PC-9 (cell line): ENCODE measurements at regions of chr19 and their contacts with region 1.

Region 1: DNA sequence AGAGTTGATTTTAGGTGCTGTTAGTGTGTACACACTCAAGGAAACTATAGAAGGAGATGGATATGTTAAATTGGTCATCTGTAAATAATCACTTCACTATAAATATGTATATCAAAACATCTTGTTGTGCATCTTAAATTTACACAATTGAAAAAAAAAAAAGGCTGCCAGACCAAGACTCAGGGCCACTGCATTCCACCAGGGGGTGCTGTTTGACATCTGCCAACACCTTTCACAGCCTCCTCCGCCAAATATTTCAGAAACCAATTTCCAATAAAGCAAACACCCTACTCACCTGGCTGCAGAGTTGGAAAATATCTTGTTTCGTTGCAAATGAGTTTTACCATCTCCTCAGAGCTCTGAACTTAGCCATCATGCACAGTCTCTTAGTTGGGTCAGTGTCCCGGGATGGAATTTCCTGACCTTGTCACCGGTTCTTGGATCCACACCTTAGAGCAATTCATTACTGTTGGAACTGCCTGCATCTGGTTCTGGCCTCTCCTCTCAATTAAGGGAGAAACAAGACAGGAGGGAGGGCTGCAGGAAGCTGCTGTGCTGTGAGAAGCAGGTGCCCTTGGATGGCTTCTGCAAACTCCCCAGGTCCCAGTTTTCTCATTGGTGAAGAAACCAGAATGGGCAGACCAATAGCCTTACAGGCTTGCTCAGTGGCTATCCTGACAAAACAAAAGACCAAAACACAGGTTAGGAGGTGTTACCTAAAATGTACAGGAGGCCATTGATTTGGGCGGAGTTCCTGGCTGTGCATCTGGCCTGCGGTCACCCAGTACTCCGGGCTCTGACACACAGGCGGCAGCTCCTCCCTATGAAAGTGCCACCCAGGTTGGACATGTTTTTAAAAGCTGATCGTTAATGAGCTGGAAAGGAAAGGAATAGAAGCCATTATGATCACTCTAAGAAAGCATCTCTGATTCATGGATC is 746.6 kb downstream of the UQCRFS1 start:
- DNase-seq: peak in 1 of 2 experiments; percentile 26
- H3K4me3 ChIP-seq: no peak overlapping the region
- H3K27ac ChIP-seq: no peak overlapping the region
- H3K4me1 ChIP-seq: no peaks in the 10 kb centered on the region
- H3K27me3 ChIP-seq: peaks cover 24% of the 10 kb centered on the region
- CTCF ChIP-seq: peak; percentile 84

Region 2: GRCh38 chr19:27752530-27753184 is 713.7 kb before region 1 on chr19:
- CTCF ChIA-PET with region 1: no interaction called
- POLR2A ChIA-PET with region 1: no interaction called
- intact Hi-C with region 1: no loop called
- DNase-seq: no peak
- H3K4me3 ChIP-seq: no peak overlapping the region
- H3K27ac ChIP-seq: no peak overlapping the region
- H3K4me1 ChIP-seq: no peaks in the 10 kb centered on the region
- H3K27me3 ChIP-seq: no peaks in the 10 kb centered on the region
- CTCF ChIP-seq: no peak

Region 3: GRCh38 chr19:28633319-28634018 is 167.1 kb after region 1 on chr19:
- CTCF ChIA-PET with region 1: no interaction called
- POLR2A ChIA-PET with region 1: no interaction called
- intact Hi-C with region 1: loop called (anchors 2 kb)
- DNase-seq: peak in 1 of 2 experiments; percentile 34
- H3K4me3 ChIP-seq: no peak overlapping the region
- H3K27ac ChIP-seq: no peak overlapping the region
- H3K4me1 ChIP-seq: no peaks in the 10 kb centered on the region
- H3K27me3 ChIP-seq: peaks cover 3% of the 10 kb centered on the region; the same call in 1 of the 2 replicates
- CTCF ChIP-seq: peak; percentile 93

Region 4: DNA sequence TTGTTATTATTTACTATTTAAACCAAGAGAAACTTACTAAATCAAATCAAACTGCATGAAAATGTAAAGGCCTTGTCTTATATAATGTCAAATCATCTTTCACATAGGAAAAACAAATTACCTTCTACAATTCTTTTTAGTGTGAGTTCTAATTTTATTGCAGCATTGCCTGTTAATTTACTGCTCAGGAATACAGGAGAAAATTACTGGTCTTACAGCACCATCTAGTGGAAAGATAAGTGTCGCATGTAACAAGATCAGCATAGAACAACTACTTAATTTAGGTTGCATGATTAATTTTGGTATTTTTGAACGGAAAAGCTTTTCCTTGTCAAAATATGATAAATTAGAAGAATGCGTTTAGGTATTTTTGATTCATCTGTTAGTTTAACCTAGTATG is 243.9 kb after region 1 on chr19:
- CTCF ChIA-PET with region 1: no interaction called
- POLR2A ChIA-PET with region 1: no interaction called
- intact Hi-C with region 1: loop called (anchors 5 kb)
- DNase-seq: peak in 1 of 2 experiments; percentile 46
- H3K4me3 ChIP-seq: no peak overlapping the region
- H3K27ac ChIP-seq: no peak overlapping the region
- H3K4me1 ChIP-seq: no peaks in the 10 kb centered on the region
- H3K27me3 ChIP-seq: no peaks in the 10 kb centered on the region
- CTCF ChIP-seq: peak; percentile 79

Region 5: GRCh38 chr19:28878862-28879566 is 412.6 kb after region 1 on chr19:
- CTCF ChIA-PET with region 1: interaction called, 3 read pairs
- POLR2A ChIA-PET with region 1: no interaction called
- intact Hi-C with region 1: loop called (anchors 5 kb)
- DNase-seq: peak in 1 of 2 experiments; percentile 40
- H3K4me3 ChIP-seq: no peak overlapping the region
- H3K27ac ChIP-seq: no peak overlapping the region
- H3K4me1 ChIP-seq: no peaks in the 10 kb centered on the region
- H3K27me3 ChIP-seq: peaks cover 62% of the 10 kb centered on the region
- CTCF ChIP-seq: peak; percentile 87

Region 6: DNA sequence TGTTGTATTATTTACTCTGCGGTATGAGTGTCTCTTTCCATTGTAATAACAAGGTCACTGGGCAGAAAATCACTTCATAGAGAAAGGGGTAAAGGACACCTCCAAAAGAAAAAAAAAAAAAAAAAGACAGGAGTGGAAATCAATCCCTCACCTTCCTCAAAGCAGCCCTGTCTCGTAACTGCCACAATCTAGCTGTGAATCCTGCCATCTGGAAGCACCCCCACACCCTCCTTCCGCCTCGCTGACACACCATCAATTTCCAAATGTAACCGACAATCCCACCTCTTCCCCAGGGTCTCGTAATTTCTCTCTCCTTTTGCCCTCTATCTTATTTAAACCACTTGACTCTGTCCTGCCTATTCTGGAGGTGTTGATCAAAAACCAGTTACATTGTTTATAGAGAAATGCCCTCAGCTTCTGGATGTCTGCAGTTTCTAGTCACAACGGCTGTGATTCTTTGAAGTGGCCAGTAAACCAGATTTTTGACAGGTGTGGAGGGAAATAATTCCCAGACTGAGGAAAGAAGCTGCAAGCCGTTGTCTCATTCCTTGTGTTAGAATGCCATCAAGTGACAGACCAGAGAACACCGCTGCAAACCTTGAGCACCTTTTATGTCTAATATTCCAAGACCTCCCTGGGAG is 1130.6 kb after region 1 on chr19:
- CTCF ChIA-PET with region 1: no interaction called
- POLR2A ChIA-PET with region 1: no interaction called
- intact Hi-C with region 1: loop called (anchors 5 kb)
- DNase-seq: no peak
- H3K4me3 ChIP-seq: no peak overlapping the region
- H3K27ac ChIP-seq: no peak overlapping the region
- H3K4me1 ChIP-seq: no peaks in the 10 kb centered on the region
- H3K27me3 ChIP-seq: peaks cover 84% of the 10 kb centered on the region
- CTCF ChIP-seq: peak; percentile 54